Activated CD4-positive, alpha-beta T cell treated with anti-CD3 and anti-CD28 coated beads, Interleukin-2, amount 10 ng/mL, durations not matched to agents 24 days and 14 days (primary cell): ENCODE measurements at regions of chr10 and their contacts with region 1.

Region 1: DNA sequence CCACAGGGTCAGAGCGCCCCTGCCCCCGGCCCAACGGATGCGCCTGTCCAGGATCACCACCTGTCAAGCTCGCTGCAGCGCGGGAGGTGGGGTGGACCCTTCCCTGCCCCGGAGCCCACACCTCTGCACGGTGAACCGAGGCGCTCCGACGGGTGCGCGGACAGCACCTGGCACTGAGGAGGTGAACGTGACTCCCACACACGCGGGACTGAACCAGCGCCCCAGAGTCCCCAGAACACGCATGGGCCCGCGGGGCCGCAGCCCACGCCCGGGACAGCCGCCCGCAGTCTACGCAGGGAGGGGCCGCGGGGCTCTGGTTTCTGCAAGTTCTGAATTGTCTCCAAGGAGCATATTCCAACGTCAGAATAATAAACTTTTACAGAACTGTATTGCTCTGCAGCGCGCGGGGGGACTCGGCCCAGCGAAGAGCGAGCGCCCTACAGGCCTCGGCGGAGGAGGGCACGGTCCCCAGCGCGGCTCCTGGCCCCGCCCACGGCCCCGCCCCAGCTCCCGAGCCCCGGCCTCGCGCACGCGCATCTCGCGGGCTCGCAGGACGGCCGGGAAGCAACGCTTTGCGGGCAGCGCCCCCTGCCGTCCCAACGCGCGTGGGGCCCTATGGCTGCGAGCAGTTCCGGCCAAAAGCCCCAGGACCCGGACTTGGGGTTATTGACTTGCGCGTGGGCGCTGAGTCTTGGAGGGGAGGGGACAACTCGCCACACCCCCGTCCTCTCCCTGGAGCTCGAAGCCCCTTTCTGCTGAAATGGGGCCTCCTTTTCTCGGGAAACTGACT is 29.7 kb downstream of the OAT start:
- DNase-seq: peak; percentile 98
- H3K4me3 Mint-ChIP-seq: no peak overlapping the region
- H3K27ac Mint-ChIP-seq: no peak overlapping the region
- H3K4me1 Mint-ChIP-seq: no peaks in the 10 kb centered on the region
- H3K27me3 Mint-ChIP-seq: peaks cover 4% of the 10 kb centered on the region

Region 2: GRCh38 chr10:123582084-123582989 is 806.7 kb before region 1 on chr10:
- intact Hi-C with region 1: loop called (anchors 2 kb)
- DNase-seq: peak; percentile 89
- H3K4me3 Mint-ChIP-seq: no peak overlapping the region
- H3K27ac Mint-ChIP-seq: no peak overlapping the region
- H3K4me1 Mint-ChIP-seq: no peaks in the 10 kb centered on the region
- H3K27me3 Mint-ChIP-seq: peaks cover 9% of the 10 kb centered on the region

Region 3: DNA sequence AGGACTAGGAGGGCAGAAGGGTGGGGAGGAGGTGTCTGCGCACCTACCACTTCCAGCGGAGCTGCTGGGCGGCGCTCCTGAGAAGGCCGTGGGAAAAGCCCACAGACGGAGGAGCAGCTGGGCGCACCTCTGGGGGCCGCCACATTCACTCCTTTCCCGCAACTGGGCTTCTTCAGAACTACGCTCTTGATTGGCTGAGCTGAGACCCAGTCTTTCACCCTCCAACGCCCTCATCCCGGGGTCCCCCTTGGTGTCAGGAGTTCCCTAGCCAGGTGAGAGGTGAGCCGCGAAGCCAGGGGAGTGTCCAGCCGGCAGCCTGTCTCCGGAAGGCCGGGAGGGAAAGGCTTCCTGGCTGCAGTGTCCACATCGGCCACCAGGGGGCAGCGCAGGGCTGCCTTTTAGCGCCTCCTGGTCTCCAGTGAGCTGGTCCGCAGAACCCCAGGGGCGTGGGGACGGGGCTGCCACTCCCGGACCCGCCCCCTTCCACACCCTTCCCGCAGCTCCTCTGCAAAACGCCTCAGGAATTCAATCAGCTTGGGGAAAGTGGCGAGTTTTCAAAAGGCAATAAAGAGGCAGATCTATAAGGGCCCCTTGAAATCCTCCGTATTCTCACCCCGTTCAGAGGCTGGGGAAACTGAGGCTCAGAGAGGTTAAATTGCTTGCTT is 394.5 kb before region 1 on chr10:
- intact Hi-C with region 1: loop called (anchors 1 kb)
- DNase-seq: peak; percentile 95
- H3K4me3 Mint-ChIP-seq: peak overlapping the region; percentile 55
- H3K27ac Mint-ChIP-seq: no peak overlapping the region
- H3K4me1 Mint-ChIP-seq: peaks cover 6% of the 10 kb centered on the region
- H3K27me3 Mint-ChIP-seq: peaks cover 62% of the 10 kb centered on the region

Region 4: GRCh38 chr10:124231168-124232155 is 157.6 kb before region 1 on chr10:
- intact Hi-C with region 1: loop called (anchors 2 kb)
- DNase-seq: peak; percentile 89
- H3K4me3 Mint-ChIP-seq: no peak overlapping the region
- H3K27ac Mint-ChIP-seq: peak overlapping the region; percentile 62
- H3K4me1 Mint-ChIP-seq: no peaks in the 10 kb centered on the region
- H3K27me3 Mint-ChIP-seq: no peaks in the 10 kb centered on the region

Region 5: DNA sequence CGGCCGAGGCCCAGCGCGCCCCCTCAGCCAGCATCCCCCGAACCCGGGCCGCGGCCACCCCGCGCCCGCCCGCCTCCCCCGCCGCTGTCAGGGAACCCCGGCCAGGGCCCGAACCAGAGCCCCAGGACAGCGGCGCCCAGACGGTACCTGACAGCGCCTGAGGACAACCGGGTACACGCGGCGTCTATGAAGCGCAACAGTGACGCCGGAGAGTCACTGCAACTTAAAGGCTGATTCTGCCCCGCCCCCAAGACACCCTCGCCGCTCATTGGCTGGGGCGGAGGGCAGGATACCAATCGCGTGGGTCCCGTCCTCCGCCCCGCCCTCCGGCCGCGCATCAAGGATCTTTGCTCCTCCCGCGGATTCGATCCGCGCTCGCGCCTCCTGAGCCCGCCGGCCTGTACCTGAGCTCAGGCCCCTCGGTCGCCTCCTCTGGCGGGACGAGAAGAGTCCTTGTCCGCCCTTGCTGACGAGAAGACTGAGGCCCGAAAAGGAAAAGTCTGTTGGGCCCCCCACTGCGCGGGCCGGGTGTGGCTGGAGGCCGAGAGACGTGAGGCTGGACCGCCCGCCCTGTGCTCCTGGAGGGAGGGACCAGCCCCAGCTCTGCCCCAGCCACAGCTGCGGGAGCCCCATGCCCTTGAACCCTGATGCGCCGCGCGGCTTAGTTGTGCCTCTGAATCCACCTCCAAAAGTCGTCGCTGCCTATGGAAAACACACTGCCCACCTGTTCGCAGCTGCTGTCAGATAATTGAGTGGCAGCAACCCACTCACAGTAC is 29.9 kb after region 1 on chr10 and contains the start of gene OAT:
- intact Hi-C with region 1: loop called (anchors 2 kb)
- DNase-seq: peak; percentile 99
- H3K4me3 Mint-ChIP-seq: peak within 1 kb of the TSS; percentile 83
- H3K27ac Mint-ChIP-seq: peak within 1 kb of the TSS; percentile 65
- H3K4me1 Mint-ChIP-seq: peaks cover 9% of the 10 kb centered on the region
- H3K27me3 Mint-ChIP-seq: peaks cover 12% of the 10 kb centered on the region
- total RNA-seq, gene OAT: 40.2 and 41.0 TPM in 2 replicates